Astrocyte of the cerebellum (primary cell): ENCODE measurements at regions of chr19 and their contacts with region 1.

Region 1: GRCh38 chr19:47124937-47125668 is 5.5 kb upstream of the SAE1 start:
- DNase-seq: no peak
- H3K4me3 ChIP-seq: no peak overlapping the region
- CTCF ChIP-seq: peak; percentile 67

Region 2: DNA sequence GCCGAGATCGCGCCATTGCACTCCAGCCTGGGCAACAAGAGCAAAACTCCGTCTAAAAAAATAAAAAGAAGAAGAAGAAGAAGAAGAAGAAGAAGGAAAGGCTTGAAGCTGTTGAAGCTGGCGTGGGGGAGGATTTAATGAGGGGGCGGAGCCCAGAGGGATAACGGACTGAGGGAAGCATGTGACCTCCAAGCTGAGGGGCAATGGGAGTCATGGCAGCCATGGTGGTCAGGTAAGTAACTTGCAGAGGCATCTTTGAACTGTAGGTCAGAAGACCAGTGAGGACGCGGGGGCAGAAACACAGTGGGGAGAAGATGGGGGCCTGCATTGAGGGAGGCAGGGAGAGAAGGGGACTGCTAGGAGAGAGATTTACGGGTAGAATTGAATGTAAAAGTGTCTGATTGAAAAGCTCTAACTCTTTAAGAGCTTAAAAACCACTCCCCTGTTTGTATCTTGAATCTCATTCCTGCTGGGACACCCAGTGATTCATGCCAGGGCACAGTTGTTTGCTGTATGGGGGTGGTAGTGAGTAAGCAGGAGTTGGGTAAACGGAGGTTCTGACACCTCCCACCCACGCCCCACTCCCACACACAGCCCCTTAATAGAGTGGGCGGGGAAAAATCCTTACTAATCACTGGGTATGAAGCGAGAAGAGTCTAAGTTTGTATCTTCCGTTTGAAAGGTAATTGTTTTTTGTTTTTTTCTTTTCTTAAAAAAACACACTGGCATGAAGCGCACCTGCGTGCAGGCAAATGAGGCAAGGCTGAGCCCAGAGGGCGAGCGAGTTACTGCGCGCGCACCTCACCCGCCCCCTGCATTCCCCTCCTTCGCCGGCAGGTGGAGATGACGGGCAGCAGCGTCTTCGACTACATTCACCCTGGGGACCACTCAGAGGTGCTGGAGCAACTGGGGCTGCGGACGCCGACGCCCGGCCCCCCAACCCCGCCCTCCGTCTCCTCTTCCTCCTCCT is 89.7 kb before region 1 on chr19:
- in situ Hi-C with region 1: no loop called
- DNase-seq: peak; percentile 45
- H3K4me3 ChIP-seq: peak overlapping the region; percentile 45
- CTCF ChIP-seq: peak; percentile 95

Region 3: DNA sequence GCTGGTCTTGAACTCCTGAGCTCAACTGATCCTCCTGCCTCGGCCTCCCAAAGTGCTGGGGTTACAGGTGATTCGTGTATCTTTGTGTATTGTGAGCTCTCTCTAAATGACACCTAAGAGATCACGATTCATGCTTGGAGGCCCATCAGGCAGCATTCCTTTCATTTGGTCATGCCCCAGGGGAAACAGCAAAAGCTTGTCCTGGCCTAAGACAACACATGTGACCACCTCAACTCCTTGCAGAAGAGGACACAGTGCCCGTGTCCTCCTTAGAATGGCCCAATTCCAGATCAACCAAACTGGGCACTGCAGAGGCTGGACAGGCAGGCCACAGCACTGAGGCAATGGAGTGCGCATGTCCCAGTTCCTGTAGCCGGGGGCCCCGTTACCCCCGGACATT is 44.0 kb before region 1 on chr19:
- in situ Hi-C with region 1: loop called (anchors 5 kb)
- DNase-seq: no peak
- H3K4me3 ChIP-seq: no peak overlapping the region
- CTCF ChIP-seq: no peak

Region 4: GRCh38 chr19:47094557-47095475 is 30.3 kb before region 1 on chr19:
- in situ Hi-C with region 1: no loop called
- DNase-seq: no peak
- H3K4me3 ChIP-seq: no peak overlapping the region
- CTCF ChIP-seq: no peak